K562 (cell line): ENCODE measurements at regions of chr2 and their contacts with region 1.

Region 1: DNA sequence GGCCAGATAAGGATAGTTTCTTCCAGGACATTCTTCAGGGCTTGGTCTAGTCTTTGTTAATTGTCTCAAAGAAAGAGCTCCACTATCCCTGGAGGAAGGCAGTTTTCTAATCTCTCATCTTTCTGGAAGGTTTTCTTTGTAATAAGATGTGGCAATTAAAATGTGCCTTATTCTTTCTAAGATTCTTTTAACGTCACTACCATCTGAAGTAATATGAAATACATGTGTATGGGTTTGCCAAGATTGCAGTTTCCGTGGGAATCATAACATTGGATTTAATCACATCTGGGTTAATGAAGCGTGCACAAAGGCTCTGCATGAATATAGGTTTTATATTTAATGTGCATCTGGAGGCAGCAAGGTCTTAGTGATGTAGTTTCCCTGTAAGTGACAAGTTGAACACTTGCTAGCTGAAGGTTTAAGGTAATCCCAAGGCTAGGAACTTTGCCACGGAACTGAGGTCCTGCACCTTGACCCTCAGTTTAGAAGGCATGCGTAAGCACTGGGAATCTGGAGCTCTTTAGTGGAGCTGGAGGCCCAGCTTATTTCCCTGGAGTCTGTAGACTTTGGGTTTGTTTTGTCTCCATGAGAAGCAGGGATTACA is 25.7 kb downstream of the DIS3L2 start:
- DNase-seq: peak in 1 of 4 experiments; percentile 21
- ATAC-seq: peak; percentile 43; the same call in 2 of the 3 replicates
- H3K4me3 ChIP-seq: no peak overlapping the region
- H3K27ac ChIP-seq: no peak overlapping the region; the same call in 2 of the 3 replicates
- H3K4me1 ChIP-seq: peaks cover 0 to 20% of the 10 kb centered on the region in 2 experiments; a peak in 4 of 5 replicates
- H3K27me3 ChIP-seq: no peaks in the 10 kb centered on the region
- CTCF ChIP-seq: no peak
- EP300 ChIP-seq: no peak
- POLR2A ChIP-seq: no peak
- RAD21 ChIP-seq: no peak

Region 2: GRCh38 chr2:231975001-231975400 is 12.2 kb before region 1 on chr2:
- CTCF ChIA-PET with region 1: no interaction called
- POLR2A ChIA-PET with region 1: interaction called, 12 read pairs
- in situ Hi-C with region 1: no loop called
- intact Hi-C with region 1: no loop called
- DNase-seq: no peak
- ATAC-seq: no peak
- H3K4me3 ChIP-seq: no peak overlapping the region
- H3K27ac ChIP-seq: no peak overlapping the region
- H3K4me1 ChIP-seq: no peaks in the 10 kb centered on the region
- H3K27me3 ChIP-seq: no peaks in the 10 kb centered on the region
- CTCF ChIP-seq: no peak
- EP300 ChIP-seq: no peak
- POLR2A ChIP-seq: no peak
- RAD21 ChIP-seq: no peak